IMR-90 (cell line): ENCODE measurements at regions of chr14 and their contacts with region 1.

Region 1: GRCh38 chr14:92748259-92749016 is at the start of gene LGMN:
- DNase-seq: peak; percentile 88
- ATAC-seq: peak; percentile 100
- H3K4me3 ChIP-seq: peak within 1 kb of the TSS; percentile 72
- H3K27ac ChIP-seq: no peak within 1 kb of the TSS; the same call in 1 of the 2 replicates
- H3K4me1 ChIP-seq: no peaks in the 10 kb centered on the region
- H3K27me3 ChIP-seq: peaks cover 14% of the 10 kb centered on the region
- CTCF ChIP-seq: no peak
- POLR2A ChIP-seq: peak; percentile 89
- RAD21 ChIP-seq: no peak
- total RNA-seq, gene LGMN: 18.9 and 19.2 TPM in 2 replicates

Region 2: DNA sequence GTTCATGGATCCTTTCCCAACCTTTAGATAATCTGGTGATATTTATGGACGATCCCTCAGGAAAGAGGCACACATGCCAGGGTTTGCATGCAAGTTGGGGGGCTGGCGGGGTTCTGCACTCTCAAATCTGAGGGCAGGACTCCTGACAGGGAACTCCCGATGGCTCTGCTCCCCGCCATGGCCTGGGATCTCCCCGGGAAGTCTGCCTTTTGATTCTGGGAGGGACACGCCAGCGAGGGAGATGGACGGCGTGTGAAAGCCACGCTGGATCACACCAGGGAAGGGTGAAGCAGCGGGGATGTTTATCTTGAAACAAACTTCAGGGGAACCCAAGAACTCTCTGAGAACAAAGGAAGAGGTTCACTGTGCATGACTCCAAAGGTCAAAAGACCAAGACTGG is 43.6 kb before region 1 on chr14:
- CTCF ChIA-PET with region 1: no interaction called
- POLR2A ChIA-PET with region 1: no interaction called
- dilution Hi-C with region 1: no loop called
- in situ Hi-C with region 1: no loop called
- intact Hi-C with region 1: loop called (anchors 5 kb)
- DNase-seq: no peak
- ATAC-seq: no peak
- H3K4me3 ChIP-seq: no peak overlapping the region
- H3K27ac ChIP-seq: no peak overlapping the region
- H3K4me1 ChIP-seq: peaks cover 8% of the 10 kb centered on the region
- H3K27me3 ChIP-seq: no peaks in the 10 kb centered on the region; the same call in 1 of the 2 replicates
- CTCF ChIP-seq: no peak
- POLR2A ChIP-seq: no peak
- RAD21 ChIP-seq: no peak

Region 3: GRCh38 chr14:92793709-92794546 is 45.5 kb after region 1 on chr14 and contains the start of gene GOLGA5:
- CTCF ChIA-PET with region 1: no interaction called
- POLR2A ChIA-PET with region 1: no interaction called
- dilution Hi-C with region 1: no loop called
- in situ Hi-C with region 1: no loop called
- intact Hi-C with region 1: no loop called
- DNase-seq: peak; percentile 98
- ATAC-seq: peak; percentile 97
- H3K4me3 ChIP-seq: peak within 1 kb of the TSS; percentile 85
- H3K27ac ChIP-seq: peak within 1 kb of the TSS; percentile 88
- H3K4me1 ChIP-seq: peaks cover 2% of the 10 kb centered on the region; the same call in 1 of the 2 replicates
- H3K27me3 ChIP-seq: no peaks in the 10 kb centered on the region
- CTCF ChIP-seq: no peak
- POLR2A ChIP-seq: peak; percentile 94
- RAD21 ChIP-seq: no peak
- total RNA-seq, gene GOLGA5: 59.5 and 70.8 TPM in 2 replicates